Activated CD4-positive, alpha-beta memory T cell treated with anti-CD3 and anti-CD28 coated beads for 36 hours (primary cell): ENCODE measurements at regions of chr2 and their contacts with region 1.

Region 1: GRCh38 chr2:189762551-189763298 is at the start of gene OSGEPL1:
- DNase-seq: peak; percentile 95
- H3K4me3 Mint-ChIP-seq: peak within 1 kb of the TSS; percentile 91
- H3K27ac Mint-ChIP-seq: peak within 1 kb of the TSS; percentile 96
- H3K4me1 Mint-ChIP-seq: peaks cover 9% of the 10 kb centered on the region
- H3K27me3 Mint-ChIP-seq: no peaks in the 10 kb centered on the region
- total RNA-seq, gene OSGEPL1: 11.1 to 11.7 TPM

Region 2: DNA sequence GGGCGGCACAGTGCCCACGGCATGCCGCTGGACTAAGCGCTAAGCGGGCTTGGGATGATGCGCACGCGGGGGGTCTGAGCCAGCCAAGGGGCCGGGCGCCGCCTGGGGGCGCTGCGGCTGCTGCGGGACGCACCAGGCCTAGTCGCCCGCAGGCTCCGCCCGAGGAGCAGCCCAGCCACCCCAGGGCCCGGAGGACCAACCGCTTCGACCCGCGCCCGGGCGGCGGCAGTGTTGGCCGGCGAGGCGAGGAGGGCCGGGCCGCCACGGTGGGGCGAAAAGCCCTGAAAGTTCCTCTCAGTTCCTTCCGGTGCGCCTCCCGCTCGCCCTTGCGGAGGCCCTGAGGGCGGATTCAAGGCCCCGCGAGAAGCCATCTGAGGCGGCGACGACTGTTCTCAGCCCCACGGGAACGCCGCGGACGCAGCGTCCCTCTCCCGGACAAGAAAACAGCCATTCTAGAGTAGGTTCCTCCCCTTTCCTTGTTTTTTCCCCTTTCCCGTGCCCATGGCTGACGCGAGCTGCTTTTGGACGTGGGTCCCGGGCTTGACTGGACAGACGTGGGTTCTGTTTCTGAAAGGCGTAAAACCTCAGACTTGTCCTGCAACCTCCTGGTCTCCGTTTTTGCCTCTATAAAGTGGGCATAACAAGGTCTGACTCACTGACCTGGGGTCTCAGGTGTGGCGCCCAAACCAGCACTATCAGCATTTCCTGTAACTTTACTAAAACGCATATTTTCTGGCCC is 88.2 kb before region 1 on chr2 and contains the start of gene ANKAR:
- CTCF ChIA-PET with region 1: interaction called, 28 read pairs
- POLR2A ChIA-PET with region 1: interaction called, 4 read pairs
- intact Hi-C with region 1: loop called (anchors 1 kb)
- DNase-seq: peak; percentile 86
- H3K4me3 Mint-ChIP-seq: peak within 1 kb of the TSS; percentile 92
- H3K27ac Mint-ChIP-seq: peak within 1 kb of the TSS; percentile 96
- H3K4me1 Mint-ChIP-seq: peaks cover 30% of the 10 kb centered on the region
- H3K27me3 Mint-ChIP-seq: no peaks in the 10 kb centered on the region
- total RNA-seq, gene ANKAR: 3.4 to 4.2 TPM

Region 3: GRCh38 chr2:189683363-189683762 is 79.4 kb before region 1 on chr2:
- CTCF ChIA-PET with region 1: interaction called, 11 read pairs
- POLR2A ChIA-PET with region 1: no interaction called
- intact Hi-C with region 1: no loop called
- DNase-seq: peak; percentile 29
- H3K4me3 Mint-ChIP-seq: no peak overlapping the region
- H3K27ac Mint-ChIP-seq: no peak overlapping the region
- H3K4me1 Mint-ChIP-seq: peaks cover 52% of the 10 kb centered on the region
- H3K27me3 Mint-ChIP-seq: no peaks in the 10 kb centered on the region

Region 4: GRCh38 chr2:189798312-189799029 is 35.7 kb after region 1 on chr2:
- CTCF ChIA-PET with region 1: interaction called, 11 read pairs
- POLR2A ChIA-PET with region 1: no interaction called
- intact Hi-C with region 1: no loop called
- DNase-seq: no peak
- H3K4me3 Mint-ChIP-seq: no peak overlapping the region
- H3K27ac Mint-ChIP-seq: no peak overlapping the region
- H3K4me1 Mint-ChIP-seq: peaks cover 3% of the 10 kb centered on the region
- H3K27me3 Mint-ChIP-seq: no peaks in the 10 kb centered on the region

Region 5: GRCh38 chr2:190190507-190190906 is 427.8 kb after region 1 on chr2:
- CTCF ChIA-PET with region 1: no interaction called
- POLR2A ChIA-PET with region 1: no interaction called
- intact Hi-C with region 1: no loop called
- DNase-seq: no peak
- H3K4me3 Mint-ChIP-seq: no peak overlapping the region
- H3K27ac Mint-ChIP-seq: no peak overlapping the region
- H3K4me1 Mint-ChIP-seq: no peaks in the 10 kb centered on the region
- H3K27me3 Mint-ChIP-seq: no peaks in the 10 kb centered on the region